ENCODE measurements at regions of chr18 and their contacts with region 1.

Region 1: DNA sequence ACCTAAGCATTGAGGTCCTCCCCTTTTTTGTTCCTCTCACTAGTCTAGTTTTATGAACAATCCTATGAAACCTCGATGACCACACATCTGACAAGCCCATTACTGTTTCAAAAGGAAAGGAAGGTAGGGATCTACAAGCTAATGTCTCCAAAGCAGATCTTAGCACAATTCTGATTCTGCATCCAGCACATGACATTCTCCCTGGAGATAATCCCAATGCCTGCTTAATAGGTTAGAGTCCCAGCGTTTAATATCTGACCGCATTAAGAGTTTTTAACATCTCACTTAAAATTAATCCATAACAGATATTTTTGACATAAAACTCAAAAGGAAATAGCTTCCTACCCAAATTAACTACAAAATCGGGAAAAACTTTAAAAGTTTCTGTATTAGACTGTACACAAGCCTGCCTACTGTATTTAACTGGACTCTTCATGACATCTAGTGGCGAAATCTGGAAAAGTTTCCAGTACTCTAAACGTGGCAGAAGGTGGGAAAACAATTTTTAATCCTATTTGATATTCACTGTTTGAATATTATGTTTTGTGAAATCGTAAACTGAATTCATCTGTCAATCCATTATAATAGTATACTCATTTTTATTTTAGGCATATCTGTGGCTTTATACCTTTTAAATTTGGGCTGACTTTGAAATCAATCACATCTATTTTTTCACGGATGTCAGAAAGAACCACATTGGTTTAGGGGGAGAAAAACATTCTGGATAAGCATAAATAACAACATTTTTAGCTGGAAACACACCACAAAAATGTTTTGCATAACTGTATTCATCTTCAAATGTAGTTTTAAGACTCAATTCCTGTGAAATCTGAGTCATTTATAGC is 62.4 kb downstream of the TXNL1 start:
- DNase-seq: peak in 1 of 5 donors; percentile 45
- ATAC-seq: peak; percentile 72 to 90 (median 80)
- H3K4me3 ChIP-seq: peak overlapping the region in 2 of 12 donors; percentile 6 to 26
- H3K27ac ChIP-seq: peak overlapping the region in 11 of 12 donors; percentile 39 to 84 (median 73)
- H3K4me1 ChIP-seq: peaks cover 10 to 38% (median 29%) of the 10 kb centered on the region in 12 donors
- H3K27me3 ChIP-seq: no peaks in the 10 kb centered on the region
- CTCF ChIP-seq: peak; percentile 55 to 88 (median 77)
- POLR2A ChIP-seq: no peak

Region 2: DNA sequence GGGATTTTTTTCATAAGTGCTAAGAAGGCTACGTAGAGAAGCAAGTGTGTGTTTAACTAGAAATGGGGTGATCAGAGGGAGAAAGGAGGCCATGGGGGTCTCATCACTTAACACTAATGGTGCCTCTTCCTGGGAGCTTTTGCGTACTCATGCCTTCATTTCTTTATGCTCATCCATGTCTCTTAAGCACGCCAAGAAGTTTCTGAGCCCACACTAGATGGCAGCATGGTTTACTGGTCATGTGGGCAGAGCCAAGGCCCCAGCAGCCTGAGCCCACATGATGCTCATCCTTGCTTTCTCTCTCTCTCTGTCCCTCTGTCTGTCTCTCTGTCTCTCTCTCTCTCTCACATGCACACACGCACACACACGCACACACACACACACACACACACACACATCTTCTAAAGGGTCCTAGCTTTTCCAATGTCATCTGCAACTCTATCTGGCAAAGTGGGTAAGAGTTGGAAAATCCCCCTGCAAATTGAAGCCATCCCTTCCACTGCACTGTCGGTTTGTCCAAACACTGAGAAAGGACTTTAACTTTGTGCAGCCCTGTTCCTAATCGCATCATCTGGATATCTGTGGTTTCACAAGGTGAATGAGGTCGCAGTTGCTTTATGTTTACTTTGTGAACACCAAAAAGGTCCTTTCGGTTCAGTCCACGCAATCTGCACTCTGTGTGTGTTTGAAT is 1479.6 kb before region 1 on chr18:
- intact Hi-C with region 1: loop called in 2 of 10 experiments (anchors 10 kb)
- DNase-seq: peak in 4 of 5 donors; percentile 38 to 44 (median 41)
- ATAC-seq: peak; percentile 77 to 87 (median 80)
- H3K4me3 ChIP-seq: no peak overlapping the region
- H3K27ac ChIP-seq: no peak overlapping the region
- H3K4me1 ChIP-seq: peaks cover 0 to 15% (median 5%) of the 10 kb centered on the region in 12 donors
- H3K27me3 ChIP-seq: no peaks in the 10 kb centered on the region
- CTCF ChIP-seq: peak in 11 of 12 donors; percentile 23 to 59 (median 36)
- POLR2A ChIP-seq: no peak

Region 3: DNA sequence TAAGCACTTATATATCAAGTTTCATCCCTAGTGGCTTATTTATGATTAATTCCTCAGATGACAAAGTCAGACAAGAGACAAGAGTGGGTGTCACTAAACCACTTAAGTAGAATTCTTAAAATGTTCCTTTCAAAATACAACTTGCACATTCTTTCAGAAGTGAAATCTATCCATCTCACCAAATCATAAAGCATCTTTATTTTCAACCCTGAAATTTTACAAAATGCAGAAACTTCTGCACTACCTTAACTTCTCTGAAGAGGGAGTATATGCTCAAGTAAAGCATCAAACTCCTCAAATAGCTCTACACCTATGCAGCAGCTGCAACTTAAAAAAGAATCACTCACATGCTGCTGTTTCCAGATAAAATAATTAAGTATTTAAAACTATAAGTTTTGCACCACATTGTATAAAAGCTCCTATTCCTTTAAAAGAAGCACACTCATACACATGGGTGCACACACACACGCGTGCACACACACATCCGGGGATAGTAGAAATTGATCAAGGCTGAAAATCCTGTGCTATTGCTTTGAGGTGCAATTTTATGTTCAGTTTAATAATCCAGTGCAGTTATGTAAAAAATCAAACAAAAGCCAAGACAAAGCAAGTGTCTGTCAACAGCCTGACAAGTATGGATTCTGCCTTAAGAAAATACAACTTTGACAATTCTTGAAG is 1232.5 kb before region 1 on chr18:
- intact Hi-C with region 1: loop called in 3 of 10 experiments (anchors 5 kb)
- DNase-seq: no peak
- ATAC-seq: peak in 3 of 4 donors; percentile 56 to 64 (median 57)
- H3K4me3 ChIP-seq: no peak overlapping the region
- H3K27ac ChIP-seq: peak overlapping the region in 2 of 12 donors; percentile 4 to 21
- H3K4me1 ChIP-seq: peaks cover 0 to 61% (median 17%) of the 10 kb centered on the region in 12 donors
- H3K27me3 ChIP-seq: no peaks in the 10 kb centered on the region
- CTCF ChIP-seq: peak; percentile 38 to 74 (median 58)
- POLR2A ChIP-seq: no peak

Region 4: DNA sequence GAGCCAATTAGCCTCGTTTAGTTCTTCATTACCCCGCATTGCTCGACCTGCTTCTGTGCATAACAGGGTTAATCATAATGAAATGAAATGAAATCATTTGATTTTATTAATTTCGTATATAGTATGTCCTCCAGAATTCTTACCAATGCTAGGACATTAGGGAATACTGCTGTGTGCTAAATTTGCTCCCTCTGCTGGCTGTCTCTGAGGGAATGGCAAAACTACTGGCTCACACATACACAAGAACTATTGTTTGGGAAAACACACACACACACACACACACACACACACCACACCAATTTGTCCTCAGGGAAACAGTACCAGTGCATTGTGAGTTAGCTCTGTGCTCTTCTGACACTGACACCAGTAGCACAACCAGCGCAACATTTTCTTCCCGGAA is 714.8 kb before region 1 on chr18:
- intact Hi-C with region 1: loop called in 3 of 10 experiments (anchors 5 to 10 kb)
- DNase-seq: no peak
- ATAC-seq: peak in 1 of 4 donors; percentile 24
- H3K4me3 ChIP-seq: no peak overlapping the region
- H3K27ac ChIP-seq: no peak overlapping the region
- H3K4me1 ChIP-seq: peaks cover 0 to 23% (median 6%) of the 10 kb centered on the region in 12 donors
- H3K27me3 ChIP-seq: no peaks in the 10 kb centered on the region
- CTCF ChIP-seq: peak in 9 of 12 donors; percentile 28 to 57 (median 41)
- POLR2A ChIP-seq: no peak

Region 5: GRCh38 chr18:56083097-56083521 is 492.9 kb before region 1 on chr18:
- intact Hi-C with region 1: loop called in 3 of 10 experiments (anchors 2 to 10 kb)
- DNase-seq: peak; percentile 66 to 89 (median 77)
- ATAC-seq: peak; percentile 73 to 91 (median 80)
- H3K4me3 ChIP-seq: no peak overlapping the region
- H3K27ac ChIP-seq: peak overlapping the region in 10 of 12 donors; percentile 16 to 81 (median 68)
- H3K4me1 ChIP-seq: peaks cover 0 to 35% (median 21%) of the 10 kb centered on the region in 12 donors
- H3K27me3 ChIP-seq: no peaks in the 10 kb centered on the region
- CTCF ChIP-seq: peak in 10 of 12 donors; percentile 7 to 58 (median 29)
- POLR2A ChIP-seq: no peak

Region 6: DNA sequence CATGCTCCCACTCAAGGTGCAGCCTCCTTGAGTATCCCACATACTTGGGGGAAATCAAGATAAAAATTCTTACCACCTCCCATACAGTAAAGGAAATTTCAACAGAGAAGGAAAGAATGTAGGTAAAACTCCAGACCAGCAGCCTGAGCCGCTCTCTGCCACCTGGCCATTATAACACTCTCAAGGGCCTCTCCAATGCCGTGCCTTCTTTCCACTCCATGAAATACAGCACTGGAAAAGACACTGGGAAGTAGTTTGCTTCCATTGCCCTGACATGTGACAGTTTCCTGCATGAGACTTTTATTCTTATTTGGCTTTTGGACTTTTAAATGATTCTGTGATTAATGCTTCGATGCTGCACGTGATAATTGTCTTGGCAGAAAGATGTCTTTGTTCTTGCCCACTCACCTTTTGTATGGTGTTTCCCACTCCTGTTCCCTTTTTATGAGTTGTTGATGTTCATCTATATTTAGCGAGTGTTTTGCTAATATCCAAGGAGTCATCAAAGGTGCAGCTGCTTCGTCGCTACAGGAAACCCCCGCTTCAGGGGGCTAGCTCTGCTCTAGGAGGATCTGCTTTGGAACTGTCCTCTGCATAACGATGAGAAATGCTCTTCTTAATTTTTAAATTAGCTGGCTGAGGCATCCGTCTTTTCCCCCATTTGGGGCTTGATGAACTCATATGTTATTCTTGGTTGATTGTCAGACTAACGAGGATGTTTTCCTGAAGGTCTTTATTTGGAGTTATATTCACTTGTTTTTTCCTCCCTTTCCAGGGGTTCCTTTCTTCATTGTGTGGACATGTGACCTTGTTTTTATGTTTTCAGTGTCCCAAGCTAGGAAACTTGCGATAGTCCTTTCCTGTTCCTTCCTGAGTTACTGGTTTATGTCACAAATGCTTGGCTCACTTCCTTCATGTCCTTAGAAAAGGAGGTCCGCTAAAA is 117.0 kb before region 1 on chr18:
- intact Hi-C with region 1: loop called in 1 of 10 experiments (anchors 10 kb)
- DNase-seq: peak in 1 of 5 donors; percentile 46
- ATAC-seq: peak in 3 of 4 donors; percentile 54 to 93 (median 78)
- H3K4me3 ChIP-seq: peak overlapping the region in 3 of 12 donors; percentile 2 to 37 (median 3)
- H3K27ac ChIP-seq: peak overlapping the region in 11 of 12 donors; percentile 38 to 83 (median 58)
- H3K4me1 ChIP-seq: peaks cover 0 to 24% (median 11%) of the 10 kb centered on the region in 12 donors
- H3K27me3 ChIP-seq: no peaks in the 10 kb centered on the region
- CTCF ChIP-seq: no peak
- POLR2A ChIP-seq: no peak

Region 7: DNA sequence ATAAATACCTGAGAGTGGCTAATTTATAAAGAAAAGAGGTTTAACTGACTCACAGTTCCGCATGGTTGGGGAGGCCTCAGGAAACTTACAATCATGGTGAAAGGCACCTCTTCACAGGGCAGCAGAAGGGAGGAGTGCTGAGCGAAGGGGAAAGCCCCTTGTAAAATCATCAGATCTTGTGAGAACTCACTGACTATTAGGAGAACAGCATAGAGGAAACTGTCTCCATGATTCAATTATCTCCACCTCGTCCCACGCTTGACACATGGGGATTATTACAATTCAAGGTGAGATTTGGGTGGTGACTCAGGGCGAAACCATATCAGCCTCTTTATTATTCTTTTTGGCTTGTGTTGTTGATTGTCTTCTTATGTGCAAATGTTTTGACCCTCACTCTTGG is 151.4 kb after region 1 on chr18:
- intact Hi-C with region 1: no loop called
- DNase-seq: no peak
- ATAC-seq: no peak
- H3K4me3 ChIP-seq: no peak overlapping the region
- H3K27ac ChIP-seq: no peak overlapping the region
- H3K4me1 ChIP-seq: no peaks in the 10 kb centered on the region
- H3K27me3 ChIP-seq: no peaks in the 10 kb centered on the region
- CTCF ChIP-seq: no peak
- POLR2A ChIP-seq: no peak

Measured in heart left ventricle (tissue), 16 donors.